Sigmoid colon (tissue), 7 donors: ENCODE measurements at regions of chr15 and their contacts with region 1.

Region 1: GRCh38 chr15:33888176-33888575 is 80.1 kb upstream of the CHRM5 start:
- DNase-seq: no peak
- H3K4me3 ChIP-seq: no peak overlapping the region
- H3K27ac ChIP-seq: no peak overlapping the region
- H3K4me1 ChIP-seq: no peaks in the 10 kb centered on the region
- H3K27me3 ChIP-seq: no peaks in the 10 kb centered on the region
- CTCF ChIP-seq: no peak
- EP300 ChIP-seq: no peak
- POLR2A ChIP-seq: no peak

Region 2: GRCh38 chr15:33795070-33795469 is 93.1 kb before region 1 on chr15:
- intact Hi-C with region 1: no loop called
- DNase-seq: no peak
- H3K4me3 ChIP-seq: no peak overlapping the region
- H3K27ac ChIP-seq: no peak overlapping the region
- H3K4me1 ChIP-seq: no peaks in the 10 kb centered on the region
- H3K27me3 ChIP-seq: no peaks in the 10 kb centered on the region
- CTCF ChIP-seq: no peak
- EP300 ChIP-seq: no peak
- POLR2A ChIP-seq: no peak

Region 3: DNA sequence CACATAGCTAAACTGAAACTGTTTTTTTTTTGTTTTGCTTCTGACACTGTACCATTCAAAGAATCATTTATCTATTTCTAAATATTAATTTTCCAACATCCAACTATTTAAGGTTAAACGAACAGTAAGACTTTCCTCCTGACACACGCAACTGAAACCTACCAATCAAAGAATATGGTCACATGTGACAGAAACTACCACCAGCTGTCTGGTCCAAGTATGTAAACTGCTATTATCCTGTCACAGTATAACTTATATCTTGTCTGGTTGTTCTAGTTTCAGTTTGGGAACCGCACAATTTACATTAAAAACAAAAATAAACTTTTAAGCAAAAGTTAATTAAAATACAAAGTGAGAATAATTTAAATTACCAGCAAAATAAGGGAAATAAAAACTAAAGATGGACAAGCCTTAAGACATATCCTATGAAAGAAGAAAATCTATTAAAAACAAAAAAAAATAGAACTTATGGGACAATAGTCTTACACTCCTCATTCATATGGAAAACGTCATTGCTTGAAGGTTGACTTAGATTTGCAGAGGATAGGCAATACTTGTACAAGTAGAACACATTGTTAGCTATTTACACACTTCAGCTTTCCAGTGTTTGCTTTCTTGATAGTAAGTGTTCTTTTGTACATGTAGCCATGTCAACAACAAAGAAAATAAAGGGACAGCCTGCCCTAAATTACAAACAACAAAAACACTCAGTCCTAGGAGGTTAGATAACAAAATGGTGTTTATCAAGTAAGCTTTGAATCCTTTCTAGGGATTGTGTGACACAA is 53.3 kb after region 1 on chr15:
- intact Hi-C with region 1: loop called (anchors 10 kb)
- DNase-seq: no peak
- H3K4me3 ChIP-seq: no peak overlapping the region
- H3K27ac ChIP-seq: no peak overlapping the region
- H3K4me1 ChIP-seq: no peaks in the 10 kb centered on the region
- H3K27me3 ChIP-seq: no peaks in the 10 kb centered on the region
- CTCF ChIP-seq: no peak
- EP300 ChIP-seq: no peak
- POLR2A ChIP-seq: no peak

Region 4: GRCh38 chr15:33955945-33956344 is 67.8 kb after region 1 on chr15:
- intact Hi-C with region 1: no loop called
- DNase-seq: no peak
- H3K4me3 ChIP-seq: no peak overlapping the region
- H3K27ac ChIP-seq: no peak overlapping the region
- H3K4me1 ChIP-seq: no peaks in the 10 kb centered on the region
- H3K27me3 ChIP-seq: no peaks in the 10 kb centered on the region
- CTCF ChIP-seq: no peak
- EP300 ChIP-seq: no peak
- POLR2A ChIP-seq: no peak